Activated B cell treated with CpG ODN at 0.5 μM for 24 hours (primary cell): ENCODE measurements at regions of chr7 and their contacts with region 1.

Region 1: GRCh38 chr7:106736508-106737201 is 75.7 kb upstream of the CCDC71L start:
- DNase-seq: no peak
- ATAC-seq: peak; percentile 99
- H3K4me3 Mint-ChIP-seq: peak overlapping the region; percentile 55
- H3K27ac Mint-ChIP-seq: peak overlapping the region; percentile 79
- H3K4me1 Mint-ChIP-seq: peaks cover 19% of the 10 kb centered on the region
- H3K27me3 Mint-ChIP-seq: no peaks in the 10 kb centered on the region
- CTCF ChIP-seq: no peak

Region 2: GRCh38 chr7:106461993-106462859 is 274.4 kb before region 1 on chr7:
- CTCF ChIA-PET with region 1: interaction called, 9 read pairs
- POLR2A ChIA-PET with region 1: no interaction called
- intact Hi-C with region 1: loop called (anchors 2 kb)
- DNase-seq: no peak
- ATAC-seq: peak; percentile 62
- H3K4me3 Mint-ChIP-seq: no peak overlapping the region
- H3K27ac Mint-ChIP-seq: no peak overlapping the region
- H3K4me1 Mint-ChIP-seq: peaks cover 14% of the 10 kb centered on the region
- H3K27me3 Mint-ChIP-seq: no peaks in the 10 kb centered on the region
- CTCF ChIP-seq: no peak

Region 3: DNA sequence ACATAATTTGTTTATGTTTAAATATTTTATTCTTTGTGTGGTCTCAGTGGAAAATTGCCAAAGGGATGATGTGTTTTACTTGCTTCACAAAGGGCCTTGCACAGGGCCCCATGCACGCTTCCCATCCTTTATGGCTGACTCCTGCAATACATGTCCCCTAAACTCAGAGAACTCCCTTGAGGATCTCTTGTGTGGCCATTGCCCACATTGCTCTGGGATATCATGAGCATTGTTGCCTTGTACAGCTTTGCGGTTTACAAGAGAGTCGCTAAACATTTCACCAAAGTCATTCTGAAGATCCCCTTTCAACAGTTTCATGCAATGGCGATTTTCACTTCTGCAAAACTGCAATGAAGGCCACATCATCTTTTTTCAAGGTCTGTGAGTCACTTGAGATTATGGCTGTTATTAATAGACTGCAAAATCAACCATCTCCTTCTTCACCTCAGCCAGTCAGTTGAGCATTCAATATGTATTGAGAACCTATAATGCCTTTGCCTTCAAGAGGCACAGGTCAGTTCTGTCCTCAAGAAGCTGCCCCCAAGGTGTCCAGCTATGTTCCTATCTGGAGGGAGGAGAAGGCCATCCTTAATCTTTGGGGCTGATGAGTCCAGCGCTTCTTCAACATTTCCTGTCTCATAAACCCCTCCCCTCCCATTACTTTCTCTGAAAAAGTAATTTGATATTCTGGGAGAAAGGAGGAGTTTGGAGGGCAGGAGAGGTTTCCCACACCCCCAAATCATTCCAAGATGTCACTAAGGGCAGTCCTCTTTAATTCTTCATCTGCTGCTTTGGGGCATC is 183.8 kb before region 1 on chr7:
- CTCF ChIA-PET with region 1: interaction called, 11 read pairs
- POLR2A ChIA-PET with region 1: no interaction called
- intact Hi-C with region 1: no loop called
- DNase-seq: peak; percentile 27
- ATAC-seq: peak; percentile 92
- H3K4me3 Mint-ChIP-seq: peak overlapping the region; percentile 39
- H3K27ac Mint-ChIP-seq: peak overlapping the region; percentile 89
- H3K4me1 Mint-ChIP-seq: peaks cover 39% of the 10 kb centered on the region
- H3K27me3 Mint-ChIP-seq: no peaks in the 10 kb centered on the region
- CTCF ChIP-seq: no peak

Region 4: GRCh38 chr7:106679153-106679931 is 57.3 kb before region 1 on chr7:
- CTCF ChIA-PET with region 1: interaction called, 15 read pairs
- POLR2A ChIA-PET with region 1: no interaction called
- intact Hi-C with region 1: no loop called
- DNase-seq: no peak
- ATAC-seq: peak; percentile 21
- H3K4me3 Mint-ChIP-seq: no peak overlapping the region
- H3K27ac Mint-ChIP-seq: no peak overlapping the region
- H3K4me1 Mint-ChIP-seq: peaks cover 9% of the 10 kb centered on the region
- H3K27me3 Mint-ChIP-seq: no peaks in the 10 kb centered on the region
- CTCF ChIP-seq: no peak

Region 5: GRCh38 chr7:106717955-106718871 is 18.4 kb before region 1 on chr7:
- CTCF ChIA-PET with region 1: interaction called, 100 read pairs
- POLR2A ChIA-PET with region 1: interaction called, 15 read pairs
- intact Hi-C with region 1: loop called (anchors 1 kb)
- DNase-seq: no peak
- ATAC-seq: peak; percentile 88
- H3K4me3 Mint-ChIP-seq: no peak overlapping the region
- H3K27ac Mint-ChIP-seq: no peak overlapping the region
- H3K4me1 Mint-ChIP-seq: peaks cover 12% of the 10 kb centered on the region
- H3K27me3 Mint-ChIP-seq: no peaks in the 10 kb centered on the region
- CTCF ChIP-seq: no peak

Region 6: GRCh38 chr7:108402865-108403264 is 1666.2 kb after region 1 on chr7:
- CTCF ChIA-PET with region 1: no interaction called
- POLR2A ChIA-PET with region 1: no interaction called
- intact Hi-C with region 1: no loop called
- DNase-seq: no peak
- ATAC-seq: no peak
- H3K4me3 Mint-ChIP-seq: no peak overlapping the region
- H3K27ac Mint-ChIP-seq: no peak overlapping the region
- H3K4me1 Mint-ChIP-seq: peaks cover 4% of the 10 kb centered on the region
- H3K27me3 Mint-ChIP-seq: peaks cover 6% of the 10 kb centered on the region
- CTCF ChIP-seq: no peak